Activated CD4-positive, alpha-beta memory T cell treated with anti-CD3 and anti-CD28 coated beads, Interleukin-2, amount 10 ng/mL, durations not matched to agents 7 days and 5 days (primary cell): ENCODE measurements at regions of chr3 and their contacts with region 1.

Region 1: GRCh38 chr3:186930641-186931531 is 560 bp downstream of the ST6GAL1 start:
- DNase-seq: peak; percentile 77
- H3K4me3 Mint-ChIP-seq: peak overlapping the region; percentile 84
- H3K27ac Mint-ChIP-seq: peak overlapping the region; percentile 88
- H3K4me1 Mint-ChIP-seq: peaks cover 39% of the 10 kb centered on the region
- H3K27me3 Mint-ChIP-seq: no peaks in the 10 kb centered on the region

Region 2: GRCh38 chr3:186552408-186553031 is 378.4 kb before region 1 on chr3:
- CTCF ChIA-PET with region 1: no interaction called
- POLR2A ChIA-PET with region 1: no interaction called
- DNase-seq: no peak
- H3K4me3 Mint-ChIP-seq: no peak overlapping the region
- H3K27ac Mint-ChIP-seq: no peak overlapping the region
- H3K4me1 Mint-ChIP-seq: no peaks in the 10 kb centered on the region
- H3K27me3 Mint-ChIP-seq: no peaks in the 10 kb centered on the region

Region 3: GRCh38 chr3:186849374-186849975 is 81.4 kb before region 1 on chr3:
- CTCF ChIA-PET with region 1: interaction called, 55 read pairs
- POLR2A ChIA-PET with region 1: interaction called, 50 read pairs
- DNase-seq: no peak
- H3K4me3 Mint-ChIP-seq: no peak overlapping the region
- H3K27ac Mint-ChIP-seq: no peak overlapping the region
- H3K4me1 Mint-ChIP-seq: peaks cover 16% of the 10 kb centered on the region
- H3K27me3 Mint-ChIP-seq: peaks cover 6% of the 10 kb centered on the region

Region 4: DNA sequence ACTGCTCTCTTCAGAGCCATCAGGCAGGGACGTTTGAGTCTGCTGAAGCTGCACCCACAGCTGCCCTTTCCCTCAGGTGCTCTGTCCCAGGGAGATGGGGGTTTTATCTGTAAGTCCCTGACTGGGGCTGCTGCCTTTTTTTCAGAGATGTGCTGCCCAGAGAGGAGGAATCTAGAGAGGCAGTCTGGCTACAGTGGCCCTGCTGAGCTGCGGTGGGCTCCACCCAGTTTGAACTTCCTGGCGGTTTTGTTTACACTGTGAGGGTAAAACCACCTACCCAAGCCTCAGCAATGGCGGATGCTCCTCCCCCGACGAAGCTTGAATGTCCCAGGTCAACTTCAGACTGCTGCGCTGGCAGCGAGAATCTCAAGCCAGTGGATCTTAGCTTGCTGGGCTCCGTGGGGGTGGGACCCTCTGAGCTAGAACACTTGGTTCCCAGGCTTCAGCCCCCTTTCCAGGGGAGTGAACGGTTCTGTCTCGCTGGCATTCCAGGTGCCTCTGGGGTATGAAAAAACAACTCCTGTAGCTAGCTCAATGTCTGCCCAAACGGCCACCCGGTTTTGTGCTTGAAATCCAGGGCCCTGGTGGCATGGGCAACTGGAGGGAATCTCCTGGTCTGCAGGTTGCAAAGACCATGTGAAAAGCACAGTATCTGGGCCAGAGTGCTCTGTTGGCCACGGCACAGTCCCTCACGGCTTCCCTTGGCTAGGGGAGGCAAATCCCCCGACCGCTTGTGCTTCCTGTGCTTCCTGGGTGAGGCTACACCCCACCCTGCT is 21.6 kb before region 1 on chr3:
- CTCF ChIA-PET with region 1: interaction called, 21 read pairs
- POLR2A ChIA-PET with region 1: interaction called, 72 read pairs
- DNase-seq: peak; percentile 91
- H3K4me3 Mint-ChIP-seq: peak overlapping the region; percentile 42
- H3K27ac Mint-ChIP-seq: peak overlapping the region; percentile 94
- H3K4me1 Mint-ChIP-seq: peaks cover 44% of the 10 kb centered on the region
- H3K27me3 Mint-ChIP-seq: no peaks in the 10 kb centered on the region

Region 5: GRCh38 chr3:186959029-186959624 is 28.2 kb after region 1 on chr3:
- CTCF ChIA-PET with region 1: interaction called, 3 read pairs
- POLR2A ChIA-PET with region 1: interaction called, 27 read pairs
- DNase-seq: no peak
- H3K4me3 Mint-ChIP-seq: no peak overlapping the region
- H3K27ac Mint-ChIP-seq: no peak overlapping the region
- H3K4me1 Mint-ChIP-seq: peaks cover 58% of the 10 kb centered on the region
- H3K27me3 Mint-ChIP-seq: no peaks in the 10 kb centered on the region

Region 6: GRCh38 chr3:187031934-187032333 is 101.0 kb after region 1 on chr3:
- CTCF ChIA-PET with region 1: interaction called, 5 read pairs
- POLR2A ChIA-PET with region 1: interaction called, 62 read pairs
- DNase-seq: no peak
- H3K4me3 Mint-ChIP-seq: peak overlapping the region; percentile 3
- H3K27ac Mint-ChIP-seq: peak overlapping the region; percentile 68
- H3K4me1 Mint-ChIP-seq: peaks cover 63% of the 10 kb centered on the region
- H3K27me3 Mint-ChIP-seq: no peaks in the 10 kb centered on the region

Region 7: GRCh38 chr3:187139126-187139894 is 208.4 kb after region 1 on chr3 and contains the start of gene RPL39L:
- CTCF ChIA-PET with region 1: interaction called, 13 read pairs
- POLR2A ChIA-PET with region 1: interaction called, 25 read pairs
- DNase-seq: peak; percentile 95
- H3K4me3 Mint-ChIP-seq: peak within 1 kb of the TSS; percentile 86
- H3K27ac Mint-ChIP-seq: peak within 1 kb of the TSS; percentile 90
- H3K4me1 Mint-ChIP-seq: peaks cover 35% of the 10 kb centered on the region
- H3K27me3 Mint-ChIP-seq: peaks cover 4% of the 10 kb centered on the region
- total RNA-seq, gene RPL39L: 23.0 to 23.1 TPM